B cell (primary cell): ENCODE measurements at regions of chr5 and their contacts with region 1.

Region 1: GRCh38 chr5:115634343-115635132 is 8.7 kb upstream of the TMED7 start:
- DNase-seq: peak; percentile 87
- ATAC-seq: peak; percentile 99
- H3K4me3 ChIP-seq: peak overlapping the region in 4 of 5 experiments; percentile 15 to 43 (median 20)
- H3K4me3 Mint-ChIP-seq: peak overlapping the region; percentile 67
- H3K27ac ChIP-seq: no peak overlapping the region
- H3K27ac Mint-ChIP-seq: no peak overlapping the region
- H3K4me1 ChIP-seq: peaks cover 5 to 6% of the 10 kb centered on the region in 2 donors
- H3K4me1 Mint-ChIP-seq: peaks cover 7% of the 10 kb centered on the region
- H3K27me3 ChIP-seq: peaks cover 0 to 12% (median 6%) of the 10 kb centered on the region in 4 experiments
- H3K27me3 Mint-ChIP-seq: peaks cover 19% of the 10 kb centered on the region
- CTCF ChIP-seq: peak; percentile 94

Region 2: GRCh38 chr5:115720888-115721287 is 86.3 kb after region 1 on chr5:
- CTCF ChIA-PET with region 1: no interaction called
- POLR2A ChIA-PET with region 1: no interaction called
- intact Hi-C with region 1: no loop called
- DNase-seq: no peak
- ATAC-seq: no peak
- H3K4me3 ChIP-seq: no peak overlapping the region
- H3K4me3 Mint-ChIP-seq: no peak overlapping the region
- H3K27ac ChIP-seq: no peak overlapping the region
- H3K27ac Mint-ChIP-seq: no peak overlapping the region
- H3K4me1 ChIP-seq: no peaks in the 10 kb centered on the region
- H3K4me1 Mint-ChIP-seq: no peaks in the 10 kb centered on the region
- H3K27me3 ChIP-seq: peaks cover 0 to 6% (median 1%) of the 10 kb centered on the region in 4 experiments
- H3K27me3 Mint-ChIP-seq: peaks cover 16% of the 10 kb centered on the region
- CTCF ChIP-seq: no peak

Region 3: GRCh38 chr5:115825948-115826347 is 191.4 kb after region 1 on chr5:
- CTCF ChIA-PET with region 1: interaction called, 14 read pairs
- POLR2A ChIA-PET with region 1: no interaction called
- intact Hi-C with region 1: loop called (anchors 1 kb)
- DNase-seq: no peak
- ATAC-seq: no peak
- H3K4me3 ChIP-seq: no peak overlapping the region
- H3K4me3 Mint-ChIP-seq: no peak overlapping the region
- H3K27ac ChIP-seq: no peak overlapping the region
- H3K27ac Mint-ChIP-seq: no peak overlapping the region
- H3K4me1 ChIP-seq: no peaks in the 10 kb centered on the region
- H3K4me1 Mint-ChIP-seq: no peaks in the 10 kb centered on the region
- H3K27me3 ChIP-seq: peaks cover 0 to 4% (median 0%) of the 10 kb centered on the region in 4 experiments
- H3K27me3 Mint-ChIP-seq: peaks cover 13% of the 10 kb centered on the region
- CTCF ChIP-seq: no peak

Region 4: DNA sequence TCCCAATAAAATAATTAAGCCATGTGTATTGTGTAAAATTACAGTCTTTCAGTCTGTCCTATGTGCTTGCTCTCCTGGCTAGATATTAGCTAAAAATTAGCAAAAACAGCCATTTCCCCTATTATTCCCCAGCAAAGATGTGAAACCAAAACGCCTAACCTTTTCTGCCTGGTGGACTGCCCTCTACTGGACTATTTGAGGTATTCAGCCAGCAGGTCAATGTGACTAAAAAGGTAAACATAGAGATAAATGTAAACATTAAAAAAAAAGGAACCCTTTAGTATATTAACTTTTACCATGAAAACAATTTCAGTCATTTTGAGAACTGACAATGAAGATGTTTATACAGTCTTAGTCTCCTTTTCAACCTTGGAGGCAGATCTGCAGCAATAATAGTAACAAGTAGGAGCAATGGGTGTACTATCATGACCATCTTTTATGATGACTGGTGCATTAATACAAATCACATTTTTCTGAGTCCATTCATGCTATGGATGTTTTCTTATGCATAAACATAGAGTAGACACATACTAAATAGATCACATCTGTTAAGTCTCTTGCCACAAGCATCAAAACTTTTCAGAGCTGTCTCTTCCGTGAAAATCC is 196.7 kb after region 1 on chr5:
- CTCF ChIA-PET with region 1: interaction called, 14 read pairs
- POLR2A ChIA-PET with region 1: no interaction called
- intact Hi-C with region 1: loop called (anchors 1 kb)
- DNase-seq: peak; percentile 68
- ATAC-seq: peak; percentile 65
- H3K4me3 ChIP-seq: no peak overlapping the region
- H3K4me3 Mint-ChIP-seq: no peak overlapping the region
- H3K27ac ChIP-seq: no peak overlapping the region
- H3K27ac Mint-ChIP-seq: no peak overlapping the region
- H3K4me1 ChIP-seq: no peaks in the 10 kb centered on the region
- H3K4me1 Mint-ChIP-seq: peaks cover 5% of the 10 kb centered on the region
- H3K27me3 ChIP-seq: no peaks in the 10 kb centered on the region
- H3K27me3 Mint-ChIP-seq: no peaks in the 10 kb centered on the region
- CTCF ChIP-seq: peak; percentile 89

Region 5: DNA sequence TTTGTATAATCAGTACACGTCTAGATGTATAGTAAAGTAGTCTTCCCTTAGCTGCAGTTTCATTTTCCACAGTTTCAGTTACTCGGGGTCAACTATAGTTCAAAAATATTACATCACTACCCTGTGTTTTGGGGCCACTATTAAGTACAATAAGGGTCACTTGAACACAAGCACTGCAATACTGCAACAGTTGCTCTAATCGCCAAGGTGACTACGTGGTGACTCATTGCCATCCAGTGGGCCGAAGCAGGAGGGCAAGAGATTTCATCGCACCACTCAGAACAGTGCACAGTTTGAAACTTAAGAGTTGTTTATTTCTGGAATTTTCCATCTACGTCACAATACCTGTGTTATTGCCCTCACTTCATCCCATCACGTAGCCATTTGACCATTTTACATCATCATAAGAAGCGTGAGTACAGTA is 397.6 kb after region 1 on chr5 and contains the start of gene ARL14EPL:
- CTCF ChIA-PET with region 1: interaction called, 12 read pairs
- POLR2A ChIA-PET with region 1: no interaction called
- intact Hi-C with region 1: no loop called
- DNase-seq: peak; percentile 36
- ATAC-seq: peak; percentile 82
- H3K4me3 ChIP-seq: peak within 1 kb of the TSS in 1 of 5 experiments; percentile 35
- H3K4me3 Mint-ChIP-seq: peak within 1 kb of the TSS; percentile 70
- H3K27ac ChIP-seq: peak within 1 kb of the TSS in 1 of 2 donors; percentile 14
- H3K27ac Mint-ChIP-seq: peak within 1 kb of the TSS; percentile 76
- H3K4me1 ChIP-seq: peaks cover 27 to 28% of the 10 kb centered on the region in 2 donors
- H3K4me1 Mint-ChIP-seq: peaks cover 43% of the 10 kb centered on the region
- H3K27me3 ChIP-seq: no peaks in the 10 kb centered on the region
- H3K27me3 Mint-ChIP-seq: peaks cover 6% of the 10 kb centered on the region
- CTCF ChIP-seq: peak; percentile 32
- total RNA-seq, gene ARL14EPL: 0.34 TPM in 1 of 2 replicates, not detected in the other

Region 6: DNA sequence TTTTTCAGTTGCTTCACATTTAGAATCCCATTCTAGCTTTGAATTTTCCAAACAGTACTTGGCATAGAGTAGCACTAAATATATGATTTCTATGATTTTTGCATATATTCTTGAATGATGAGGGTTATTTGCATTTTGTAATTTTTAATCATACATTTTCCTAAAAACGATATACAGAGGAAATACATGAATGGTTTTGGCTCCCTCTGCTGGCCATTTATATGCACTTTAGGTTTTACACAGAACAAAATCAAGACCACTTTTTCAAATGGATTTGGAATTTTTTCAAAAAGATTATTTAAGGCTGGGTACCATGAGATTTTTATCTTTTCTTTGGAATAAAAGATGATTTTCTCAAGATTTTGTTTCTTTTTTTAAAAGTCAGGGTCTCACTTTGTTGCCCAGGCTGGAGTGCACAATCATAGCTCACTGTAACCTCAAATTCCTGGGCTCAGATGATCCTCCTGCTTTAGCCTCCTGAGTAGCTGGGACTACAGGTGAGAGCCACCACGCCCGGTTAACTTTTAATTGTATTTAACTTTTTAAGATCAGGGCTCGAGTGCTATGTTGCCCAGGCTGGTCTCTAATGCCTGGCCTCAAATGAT is 433.6 kb after region 1 on chr5:
- CTCF ChIA-PET with region 1: interaction called, 4 read pairs
- POLR2A ChIA-PET with region 1: no interaction called
- intact Hi-C with region 1: loop called (anchors 1 kb)
- DNase-seq: peak; percentile 74
- ATAC-seq: peak; percentile 43
- H3K4me3 ChIP-seq: no peak overlapping the region
- H3K4me3 Mint-ChIP-seq: no peak overlapping the region
- H3K27ac ChIP-seq: no peak overlapping the region
- H3K27ac Mint-ChIP-seq: no peak overlapping the region
- H3K4me1 ChIP-seq: no peaks in the 10 kb centered on the region
- H3K4me1 Mint-ChIP-seq: no peaks in the 10 kb centered on the region
- H3K27me3 ChIP-seq: no peaks in the 10 kb centered on the region
- H3K27me3 Mint-ChIP-seq: peaks cover 3% of the 10 kb centered on the region
- CTCF ChIP-seq: peak; percentile 96